WTC11 (cell line): ENCODE measurements at regions of chr10 and their contacts with region 1.

Region 1: GRCh38 chr10:63083904-63084689 is 49.0 kb upstream of the NRBF2 start:
- DNase-seq: peak; percentile 28
- ATAC-seq: peak; percentile 95
- H3K4me3 Mint-ChIP-seq: no peak overlapping the region
- H3K27ac Mint-ChIP-seq: no peak overlapping the region
- H3K4me1 Mint-ChIP-seq: no peaks in the 10 kb centered on the region
- H3K27me3 Mint-ChIP-seq: no peaks in the 10 kb centered on the region
- CTCF ChIP-seq: peak; percentile 50

Region 2: DNA sequence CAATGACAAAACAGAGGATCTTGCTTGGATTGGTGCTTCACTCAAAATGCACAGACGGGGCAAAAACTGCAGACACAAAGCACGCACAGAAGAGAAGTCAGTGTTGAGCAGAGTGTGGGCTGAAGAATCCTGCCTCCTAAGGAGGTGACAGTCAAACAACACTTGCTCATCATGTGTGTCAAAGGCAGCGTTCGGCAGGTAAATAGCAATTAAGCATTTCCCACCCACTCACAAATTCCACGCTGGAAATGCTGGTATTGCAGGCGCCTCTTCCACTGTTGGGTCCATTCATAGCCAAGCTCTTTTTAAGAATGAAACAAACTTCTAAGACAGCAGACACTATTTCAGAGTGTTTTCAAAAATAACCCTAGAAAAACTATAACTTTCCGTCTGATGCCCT is 10.2 kb before region 1 on chr10:
- CTCF ChIA-PET with region 1: interaction called, 13 read pairs
- POLR2A ChIA-PET with region 1: interaction called, 3 read pairs
- DNase-seq: no peak
- ATAC-seq: no peak
- H3K4me3 Mint-ChIP-seq: no peak overlapping the region
- H3K27ac Mint-ChIP-seq: no peak overlapping the region
- H3K4me1 Mint-ChIP-seq: peaks cover 4% of the 10 kb centered on the region
- H3K27me3 Mint-ChIP-seq: no peaks in the 10 kb centered on the region
- CTCF ChIP-seq: no peak